Activated CD4-positive, alpha-beta memory T cell treated with anti-CD3 and anti-CD28 coated beads for 36 hours (primary cell): ENCODE measurements at regions of chr20 and their contacts with region 1.

Region 1: DNA sequence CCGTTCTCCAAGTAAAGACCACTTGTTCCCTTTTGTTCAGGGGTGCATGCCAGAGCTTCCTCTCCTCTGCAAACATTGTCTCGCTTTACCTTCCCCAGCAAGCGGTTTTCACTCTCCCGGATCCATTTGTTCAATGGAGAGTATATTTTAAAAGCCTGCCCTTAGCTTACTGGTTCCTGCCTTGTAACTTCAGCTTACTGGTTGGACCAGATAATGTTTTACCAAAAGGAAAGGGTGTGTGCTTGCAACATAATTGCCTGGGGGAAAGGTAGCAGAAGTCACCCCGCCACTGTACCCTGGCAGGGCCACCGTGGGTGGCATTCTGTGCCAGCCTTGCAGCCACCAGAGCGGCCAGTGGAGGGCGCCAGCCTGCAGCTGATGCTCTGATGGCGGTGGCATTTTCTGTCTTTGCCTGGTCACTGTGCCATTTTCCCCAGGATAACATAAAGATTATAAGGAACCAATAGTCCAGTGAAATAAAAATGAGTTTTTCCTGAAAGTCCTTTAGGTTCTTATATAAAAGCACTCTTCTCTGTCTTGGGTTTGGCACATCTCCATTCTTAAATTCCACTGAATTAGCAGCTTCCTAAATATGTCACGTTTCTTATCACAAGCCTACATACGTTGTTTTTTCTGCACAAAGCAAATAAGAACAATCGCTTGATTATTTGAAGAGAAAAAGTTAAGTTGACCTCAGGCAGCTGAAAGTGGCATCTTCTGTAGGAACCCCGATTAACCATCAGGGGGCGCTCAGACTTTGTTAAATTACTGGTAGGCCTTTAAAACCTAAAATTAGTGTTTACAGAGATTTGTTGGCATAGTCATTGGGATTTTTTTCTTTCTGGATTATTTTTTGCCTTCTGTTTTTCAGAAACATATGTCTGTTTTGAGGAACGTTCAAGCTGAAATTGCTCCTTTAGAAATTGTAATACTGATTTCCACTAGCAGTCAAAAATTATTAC is 67.4 kb upstream of the XRN2 start:
- DNase-seq: peak; percentile 75
- H3K4me3 Mint-ChIP-seq: no peak overlapping the region
- H3K27ac Mint-ChIP-seq: no peak overlapping the region
- H3K4me1 Mint-ChIP-seq: peaks cover 3% of the 10 kb centered on the region
- H3K27me3 Mint-ChIP-seq: no peaks in the 10 kb centered on the region

Region 2: GRCh38 chr20:21125849-21126580 is 109.8 kb before region 1 on chr20 and contains the start of gene KIZ:
- CTCF ChIA-PET with region 1: interaction called, 11 read pairs
- POLR2A ChIA-PET with region 1: no interaction called
- intact Hi-C with region 1: no loop called
- DNase-seq: peak; percentile 98
- H3K4me3 Mint-ChIP-seq: peak within 1 kb of the TSS; percentile 81
- H3K27ac Mint-ChIP-seq: peak within 1 kb of the TSS; percentile 69
- H3K4me1 Mint-ChIP-seq: peaks cover 18% of the 10 kb centered on the region
- H3K27me3 Mint-ChIP-seq: peaks cover 3% of the 10 kb centered on the region
- total RNA-seq, gene KIZ: 13.3 to 13.5 TPM

Region 3: GRCh38 chr20:21323640-21324039 is 87.9 kb after region 1 on chr20:
- CTCF ChIA-PET with region 1: interaction called, 11 read pairs
- POLR2A ChIA-PET with region 1: no interaction called
- intact Hi-C with region 1: loop called (anchors 10 kb)
- DNase-seq: no peak
- H3K4me3 Mint-ChIP-seq: no peak overlapping the region
- H3K27ac Mint-ChIP-seq: peak overlapping the region; percentile 45
- H3K4me1 Mint-ChIP-seq: peaks cover 65% of the 10 kb centered on the region
- H3K27me3 Mint-ChIP-seq: no peaks in the 10 kb centered on the region

Region 4: GRCh38 chr20:21490095-21490494 is 254.3 kb after region 1 on chr20:
- CTCF ChIA-PET with region 1: interaction called, 27 read pairs
- POLR2A ChIA-PET with region 1: no interaction called
- intact Hi-C with region 1: no loop called
- DNase-seq: no peak
- H3K4me3 Mint-ChIP-seq: no peak overlapping the region
- H3K27ac Mint-ChIP-seq: no peak overlapping the region
- H3K4me1 Mint-ChIP-seq: no peaks in the 10 kb centered on the region
- H3K27me3 Mint-ChIP-seq: peaks cover 32% of the 10 kb centered on the region

Region 5: GRCh38 chr20:21520702-21521595 is 285.2 kb after region 1 on chr20:
- CTCF ChIA-PET with region 1: interaction called, 11 read pairs
- POLR2A ChIA-PET with region 1: no interaction called
- intact Hi-C with region 1: no loop called
- DNase-seq: no peak
- H3K4me3 Mint-ChIP-seq: peak overlapping the region; percentile 31
- H3K27ac Mint-ChIP-seq: peak overlapping the region; percentile 10
- H3K4me1 Mint-ChIP-seq: peaks cover 33% of the 10 kb centered on the region
- H3K27me3 Mint-ChIP-seq: peaks cover 84% of the 10 kb centered on the region

Region 6: GRCh38 chr20:21615617-21616080 is 379.9 kb after region 1 on chr20:
- CTCF ChIA-PET with region 1: interaction called, 23 read pairs
- POLR2A ChIA-PET with region 1: no interaction called
- intact Hi-C with region 1: no loop called
- DNase-seq: peak; percentile 65
- H3K4me3 Mint-ChIP-seq: no peak overlapping the region
- H3K27ac Mint-ChIP-seq: no peak overlapping the region
- H3K4me1 Mint-ChIP-seq: no peaks in the 10 kb centered on the region
- H3K27me3 Mint-ChIP-seq: peaks cover 8% of the 10 kb centered on the region

Region 7: GRCh38 chr20:22846863-22847262 is 1611.1 kb after region 1 on chr20:
- CTCF ChIA-PET with region 1: no interaction called
- POLR2A ChIA-PET with region 1: no interaction called
- intact Hi-C with region 1: no loop called
- DNase-seq: no peak
- H3K4me3 Mint-ChIP-seq: no peak overlapping the region
- H3K27ac Mint-ChIP-seq: no peak overlapping the region
- H3K4me1 Mint-ChIP-seq: no peaks in the 10 kb centered on the region
- H3K27me3 Mint-ChIP-seq: peaks cover 1% of the 10 kb centered on the region